ENCODE measurements at regions of chr10 and their contacts with region 1.

Region 1: DNA sequence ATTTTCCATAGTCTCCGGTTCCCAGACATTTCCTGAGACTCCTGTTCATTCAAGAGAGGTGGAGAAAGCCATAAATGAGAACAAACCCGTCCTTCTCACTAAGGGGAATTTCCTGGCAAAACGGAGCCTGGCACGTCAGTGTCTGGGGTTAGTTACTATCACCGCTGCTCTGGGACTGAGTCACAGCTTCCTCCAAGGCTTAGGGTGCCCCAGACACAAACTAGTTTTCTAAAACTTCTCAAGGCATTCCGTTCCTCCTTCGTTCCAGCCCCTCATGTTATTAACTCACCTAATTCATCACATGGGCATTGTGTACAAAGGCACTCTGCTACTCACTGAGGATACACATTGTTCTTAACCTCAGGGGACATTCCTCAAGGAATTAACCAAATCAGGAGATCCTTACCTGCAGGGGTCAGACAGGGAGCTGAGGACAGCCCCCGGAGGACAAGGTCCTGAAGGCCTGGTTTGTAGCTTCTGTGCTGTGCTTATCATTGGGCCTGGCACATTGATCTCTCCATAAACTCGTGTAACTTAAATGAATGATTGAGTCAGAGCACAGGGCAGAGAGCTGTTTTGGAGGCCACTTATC is 103.0 kb upstream of the KLF6 start:
- DNase-seq: peak; percentile 65 to 95
- H3K4me3 ChIP-seq: no peak overlapping the region
- H3K27ac ChIP-seq: peak overlapping the region; percentile 87
- H3K4me1 ChIP-seq: peaks cover 3 to 30% of the 10 kb centered on the region in 2 donors
- H3K27me3 ChIP-seq: no peaks in the 10 kb centered on the region
- CTCF ChIP-seq: no peak

Region 2: GRCh38 chr10:3339531-3339950 is 548.4 kb before region 1 on chr10:
- intact Hi-C with region 1: no loop called
- DNase-seq: no peak
- H3K4me3 ChIP-seq: no peak overlapping the region
- H3K27ac ChIP-seq: no peak overlapping the region
- H3K4me1 ChIP-seq: no peaks in the 10 kb centered on the region
- H3K27me3 ChIP-seq: no peaks in the 10 kb centered on the region
- CTCF ChIP-seq: no peak

Region 3: GRCh38 chr10:3785257-3785850 is 102.6 kb before region 1 on chr10:
- intact Hi-C with region 1: loop called (anchors 2 kb)
- DNase-seq: peak; percentile 94 to 99
- H3K4me3 ChIP-seq: peak overlapping the region; percentile 97 to 99
- H3K27ac ChIP-seq: peak overlapping the region; percentile 100
- H3K4me1 ChIP-seq: peaks cover 0 to 4% of the 10 kb centered on the region in 2 donors
- H3K27me3 ChIP-seq: no peaks in the 10 kb centered on the region
- CTCF ChIP-seq: no peak

Region 4: DNA sequence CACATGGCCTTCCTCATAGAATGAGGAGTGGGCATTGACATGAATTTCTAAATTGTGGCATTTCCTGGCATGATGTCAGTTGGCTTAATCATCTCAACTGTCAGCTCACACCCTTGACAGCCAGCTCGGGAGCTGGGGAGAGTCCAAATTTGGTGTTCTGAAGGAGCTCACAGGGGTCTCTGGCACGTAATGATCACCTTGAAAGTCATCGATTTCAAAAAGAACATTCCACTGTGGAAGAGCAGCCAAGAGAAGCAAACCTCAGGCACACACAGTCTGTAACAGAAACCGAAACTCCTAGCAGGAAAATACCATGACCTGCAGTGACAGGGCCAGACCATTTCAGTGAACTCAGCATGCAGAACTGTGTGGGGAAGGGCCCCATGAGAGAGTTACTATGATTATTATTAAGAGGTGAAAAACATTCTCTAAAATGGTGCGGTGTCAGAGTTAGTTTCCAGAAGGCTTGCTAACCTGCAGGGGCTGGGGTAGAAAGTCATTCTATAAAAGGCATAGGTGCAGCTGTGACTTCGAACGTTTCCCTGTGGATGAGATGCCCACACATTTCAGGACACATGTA is 76.6 kb before region 1 on chr10:
- intact Hi-C with region 1: loop called (anchors 2 kb)
- DNase-seq: no peak
- H3K4me3 ChIP-seq: peak overlapping the region in 1 of 2 donors; percentile 44
- H3K27ac ChIP-seq: peak overlapping the region; percentile 88 to 92
- H3K4me1 ChIP-seq: peaks cover 18 to 38% of the 10 kb centered on the region in 2 donors
- H3K27me3 ChIP-seq: no peaks in the 10 kb centered on the region
- CTCF ChIP-seq: no peak

Region 5: GRCh38 chr10:3852147-3852904 is 35.7 kb before region 1 on chr10:
- intact Hi-C with region 1: loop called (anchors 2 kb)
- DNase-seq: peak; percentile 68 to 93
- H3K4me3 ChIP-seq: peak overlapping the region in 1 of 2 donors; percentile 15
- H3K27ac ChIP-seq: peak overlapping the region; percentile 85 to 87
- H3K4me1 ChIP-seq: peaks cover 4 to 36% of the 10 kb centered on the region in 2 donors
- H3K27me3 ChIP-seq: no peaks in the 10 kb centered on the region
- CTCF ChIP-seq: no peak

Region 6: GRCh38 chr10:4046030-4046429 is 158.0 kb after region 1 on chr10:
- intact Hi-C with region 1: loop called (anchors 5 kb)
- DNase-seq: no peak
- H3K4me3 ChIP-seq: no peak overlapping the region
- H3K27ac ChIP-seq: peak overlapping the region in 1 of 2 donors; percentile 6
- H3K4me1 ChIP-seq: peaks cover 0 to 17% of the 10 kb centered on the region in 2 donors
- H3K27me3 ChIP-seq: no peaks in the 10 kb centered on the region
- CTCF ChIP-seq: no peak

Region 7: DNA sequence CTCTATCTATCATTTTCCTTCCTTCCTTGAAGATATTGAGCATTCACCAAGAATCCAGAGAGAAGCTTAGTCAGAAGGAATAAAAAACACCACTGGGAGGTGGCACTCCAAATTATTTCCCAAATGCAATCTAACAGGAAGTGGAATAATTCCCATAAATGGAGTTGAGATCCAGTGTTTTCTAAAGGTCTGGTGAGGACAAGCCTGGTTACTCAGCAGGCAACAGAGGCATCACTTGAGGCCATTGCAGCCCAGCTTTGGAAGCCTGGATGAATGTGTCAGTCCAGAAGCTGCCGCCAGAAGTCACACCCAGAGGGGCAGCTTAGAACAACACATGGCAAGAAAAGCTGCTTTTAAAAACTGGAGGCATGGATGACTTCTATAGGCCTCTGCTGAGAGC is 185.9 kb after region 1 on chr10:
- intact Hi-C with region 1: loop called (anchors 5 kb)
- DNase-seq: peak in 1 of 2 donors; percentile 87
- H3K4me3 ChIP-seq: no peak overlapping the region
- H3K27ac ChIP-seq: peak overlapping the region; percentile 64 to 78
- H3K4me1 ChIP-seq: peaks cover 8 to 42% of the 10 kb centered on the region in 2 donors
- H3K27me3 ChIP-seq: no peaks in the 10 kb centered on the region
- CTCF ChIP-seq: no peak

Region 8: DNA sequence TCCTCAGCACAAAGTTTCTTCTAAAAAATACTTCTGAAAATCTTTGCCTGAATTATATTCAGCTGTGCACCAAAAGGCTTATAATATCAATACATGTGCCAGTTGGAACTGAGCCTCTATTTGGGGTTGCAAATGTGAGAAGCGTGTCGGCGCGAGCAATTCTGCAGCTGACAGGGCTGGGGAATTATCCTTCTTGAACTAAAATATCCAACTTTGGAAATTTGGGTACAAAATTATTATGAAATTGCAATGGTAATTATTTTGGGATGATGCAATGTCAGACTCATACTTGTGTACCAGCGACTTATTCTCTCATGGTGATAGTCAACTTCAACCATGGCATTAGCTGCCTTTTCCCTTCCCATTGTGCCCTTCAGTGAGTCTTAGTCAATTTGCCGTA is 404.0 kb after region 1 on chr10:
- intact Hi-C with region 1: no loop called
- DNase-seq: no peak
- H3K4me3 ChIP-seq: no peak overlapping the region
- H3K27ac ChIP-seq: peak overlapping the region; percentile 7 to 42
- H3K4me1 ChIP-seq: peaks cover 0 to 10% of the 10 kb centered on the region in 2 donors
- H3K27me3 ChIP-seq: no peaks in the 10 kb centered on the region
- CTCF ChIP-seq: no peak

Measured in ascending aorta (tissue), 2 donors.